ENCODE measurements at regions of chr5 and their contacts with region 1.

Region 1: GRCh38 chr5:59810041-59810440 is 83.5 kb downstream of the PDE4D start:
- DNase-seq: peak; percentile 85
- H3K4me3 ChIP-seq: peak overlapping the region in 2 of 4 donors; percentile 16 to 26
- H3K27ac ChIP-seq: no peak overlapping the region
- H3K4me1 ChIP-seq: peaks cover 0 to 4% (median 0%) of the 10 kb centered on the region in 4 donors
- H3K27me3 ChIP-seq: no peaks in the 10 kb centered on the region
- CTCF ChIP-seq: peak; percentile 64 to 90 (median 86)
- EP300 ChIP-seq: no peak
- POLR2A ChIP-seq: no peak

Region 2: DNA sequence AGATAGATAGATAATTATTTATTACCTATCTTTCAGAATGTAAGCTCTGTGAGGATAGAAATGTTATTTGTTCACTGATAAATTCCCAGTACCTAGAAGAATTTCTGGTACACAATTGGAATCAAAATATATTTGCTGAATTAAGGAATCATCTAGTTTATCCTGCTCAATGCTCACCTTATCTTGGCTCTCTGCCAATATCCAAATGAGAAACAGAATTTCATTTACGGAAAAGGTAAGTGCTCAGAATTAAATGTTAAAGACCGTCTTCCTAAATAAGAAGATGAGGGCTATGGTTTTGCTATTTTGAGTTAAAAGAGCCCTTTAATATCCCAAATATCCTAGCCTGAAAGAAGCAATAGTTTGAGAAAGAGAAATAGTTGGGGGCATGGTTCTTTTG is 315.6 kb after region 1 on chr5:
- intact Hi-C with region 1: no loop called
- DNase-seq: no peak
- H3K4me3 ChIP-seq: no peak overlapping the region
- H3K27ac ChIP-seq: no peak overlapping the region
- H3K4me1 ChIP-seq: no peaks in the 10 kb centered on the region
- H3K27me3 ChIP-seq: no peaks in the 10 kb centered on the region
- CTCF ChIP-seq: no peak
- EP300 ChIP-seq: no peak
- POLR2A ChIP-seq: no peak

Region 3: GRCh38 chr5:60257596-60258271 is 447.7 kb after region 1 on chr5:
- intact Hi-C with region 1: no loop called
- DNase-seq: no peak
- H3K4me3 ChIP-seq: no peak overlapping the region
- H3K27ac ChIP-seq: no peak overlapping the region
- H3K4me1 ChIP-seq: no peaks in the 10 kb centered on the region
- H3K27me3 ChIP-seq: no peaks in the 10 kb centered on the region
- CTCF ChIP-seq: no peak
- EP300 ChIP-seq: no peak
- POLR2A ChIP-seq: no peak

Region 4: DNA sequence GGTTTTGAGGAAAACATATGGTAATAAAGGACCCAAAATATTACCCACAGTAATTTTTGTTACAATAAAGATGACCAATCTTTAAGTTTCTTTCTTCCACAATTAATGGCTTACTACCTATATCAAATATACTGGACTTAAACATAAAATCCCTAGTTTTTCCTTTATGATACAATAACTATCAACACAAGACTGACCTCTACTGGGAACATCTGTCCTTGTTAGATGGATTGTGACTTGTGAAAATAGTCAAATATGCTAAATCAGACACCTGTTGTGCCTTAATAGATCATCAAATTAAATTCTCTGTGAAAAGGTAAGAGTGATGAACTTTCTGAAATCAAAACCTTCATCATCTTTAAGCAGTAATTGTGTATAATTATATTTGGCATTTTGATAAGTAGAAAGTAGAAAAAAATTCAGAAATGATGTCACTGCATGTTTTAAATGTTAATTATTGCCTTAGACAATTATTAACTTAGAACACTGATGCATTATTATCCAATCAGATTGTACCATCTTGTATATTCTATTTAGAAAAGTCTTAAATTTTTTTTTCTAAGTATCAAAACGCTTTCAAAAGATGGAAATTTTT is 776.4 kb after region 1 on chr5:
- intact Hi-C with region 1: loop called (anchors 2 kb)
- DNase-seq: no peak
- H3K4me3 ChIP-seq: no peak overlapping the region
- H3K27ac ChIP-seq: no peak overlapping the region
- H3K4me1 ChIP-seq: peaks cover 0 to 12% (median 2%) of the 10 kb centered on the region in 4 donors
- H3K27me3 ChIP-seq: no peaks in the 10 kb centered on the region
- CTCF ChIP-seq: peak; percentile 36 to 59 (median 38)
- EP300 ChIP-seq: no peak
- POLR2A ChIP-seq: no peak

Region 5: GRCh38 chr5:60649283-60649917 is 839.4 kb after region 1 on chr5:
- intact Hi-C with region 1: loop called (anchors 5 kb)
- DNase-seq: no peak
- H3K4me3 ChIP-seq: no peak overlapping the region
- H3K27ac ChIP-seq: no peak overlapping the region
- H3K4me1 ChIP-seq: no peaks in the 10 kb centered on the region
- H3K27me3 ChIP-seq: no peaks in the 10 kb centered on the region
- CTCF ChIP-seq: peak in 2 of 4 experiments; percentile 32 to 34
- EP300 ChIP-seq: no peak
- POLR2A ChIP-seq: no peak

Region 6: DNA sequence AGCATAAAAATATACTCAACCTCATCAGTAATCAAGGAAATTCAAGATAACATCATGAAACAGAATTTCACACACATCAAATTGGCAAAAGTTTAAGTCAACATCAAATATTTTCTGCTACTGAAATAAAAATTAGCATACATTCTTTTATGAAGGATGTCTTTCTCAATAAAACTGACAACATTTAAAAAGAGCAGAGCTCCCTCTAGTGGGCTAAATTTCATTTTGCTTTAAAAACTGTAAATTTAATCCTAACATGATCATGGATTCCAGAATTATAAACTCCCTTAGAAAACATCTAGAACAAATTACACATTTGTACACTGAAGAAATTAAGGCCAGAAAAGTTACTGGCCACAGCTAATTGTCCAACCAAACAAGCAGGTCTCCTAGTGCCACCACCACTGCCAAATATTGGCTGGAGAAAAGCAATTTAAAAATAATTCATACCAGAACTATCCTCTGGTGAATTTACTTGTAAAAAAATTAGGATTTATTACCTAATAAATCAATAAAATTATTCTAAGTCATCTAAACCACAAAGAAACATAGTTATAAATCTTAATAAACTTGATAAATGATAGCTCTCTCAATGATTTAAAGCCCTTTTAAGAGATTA is 858.8 kb after region 1 on chr5:
- intact Hi-C with region 1: loop called (anchors 5 kb)
- DNase-seq: no peak
- H3K4me3 ChIP-seq: no peak overlapping the region
- H3K27ac ChIP-seq: no peak overlapping the region
- H3K4me1 ChIP-seq: no peaks in the 10 kb centered on the region
- H3K27me3 ChIP-seq: no peaks in the 10 kb centered on the region
- CTCF ChIP-seq: peak in 3 of 4 experiments; percentile 13 to 61 (median 31)
- EP300 ChIP-seq: no peak
- POLR2A ChIP-seq: no peak